Dendritic cell treated with granulocyte-macrophage colony-stimulating factor and Interleukin-4, amounts not matched to agents 40 ng/mL and 50 ng/mL, for 4 days (primary cell): ENCODE measurements at regions of chr10 and their contacts with region 1.

Region 1: GRCh38 chr10:31707093-31708039 is 221.3 kb downstream of the ARHGAP12 start:
- H3K4me3 Mint-ChIP-seq: peak overlapping the region; percentile 83
- H3K27ac Mint-ChIP-seq: peak overlapping the region; percentile 97
- H3K4me1 Mint-ChIP-seq: peaks cover 76% of the 10 kb centered on the region
- H3K27me3 Mint-ChIP-seq: no peaks in the 10 kb centered on the region

Region 2: GRCh38 chr10:31664803-31665202 is 42.6 kb before region 1 on chr10:
- intact Hi-C with region 1: no loop called
- H3K4me3 Mint-ChIP-seq: no peak overlapping the region
- H3K27ac Mint-ChIP-seq: no peak overlapping the region
- H3K4me1 Mint-ChIP-seq: peaks cover 10% of the 10 kb centered on the region
- H3K27me3 Mint-ChIP-seq: no peaks in the 10 kb centered on the region

Region 3: GRCh38 chr10:31749981-31750731 is 42.8 kb after region 1 on chr10:
- intact Hi-C with region 1: loop called (anchors 5 kb)
- H3K4me3 Mint-ChIP-seq: no peak overlapping the region
- H3K27ac Mint-ChIP-seq: peak overlapping the region; percentile 68
- H3K4me1 Mint-ChIP-seq: peaks cover 45% of the 10 kb centered on the region
- H3K27me3 Mint-ChIP-seq: peaks cover 2% of the 10 kb centered on the region

Region 4: DNA sequence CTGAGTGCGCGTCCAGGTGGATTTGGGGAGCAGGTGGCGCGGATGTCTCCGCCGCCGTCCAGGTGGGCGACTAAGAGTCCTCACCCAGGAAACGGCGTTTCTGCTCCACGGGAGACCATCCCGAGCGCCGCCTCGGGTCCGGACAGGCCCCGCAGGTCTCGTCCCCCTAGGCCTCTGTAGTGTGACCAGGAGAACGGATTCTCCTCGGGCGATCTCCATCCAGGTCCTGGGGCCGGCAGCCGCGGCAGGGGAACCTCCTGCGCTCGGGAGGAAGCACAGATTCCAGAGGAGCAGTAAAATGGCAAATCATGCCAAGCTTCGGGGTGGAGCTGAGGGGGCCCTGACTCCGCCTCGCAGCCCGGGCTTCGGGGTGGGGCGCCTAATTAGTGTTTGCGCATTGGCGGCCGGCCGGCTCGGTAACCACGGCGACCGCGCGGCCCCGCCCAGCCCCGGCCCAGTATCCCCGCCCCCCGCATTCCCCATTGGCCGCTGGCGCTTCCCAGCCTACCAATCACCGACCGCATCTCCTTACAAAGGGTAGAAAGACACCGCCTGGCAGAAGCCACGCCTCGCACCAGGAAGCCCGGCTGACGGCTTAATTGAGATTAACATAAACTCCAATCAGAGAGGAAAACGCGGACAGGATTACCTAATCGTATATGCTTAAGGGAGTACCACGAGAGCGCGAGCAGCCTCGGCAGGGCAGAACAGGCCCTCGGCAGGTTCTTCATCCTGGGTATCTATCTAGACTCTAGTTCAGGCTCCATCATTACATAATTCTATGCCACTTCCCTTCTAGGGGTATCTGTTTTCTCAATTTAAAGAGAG is 52.6 kb after region 1 on chr10:
- intact Hi-C with region 1: loop called (anchors 1 kb)
- H3K4me3 Mint-ChIP-seq: peak overlapping the region; percentile 90
- H3K27ac Mint-ChIP-seq: peak overlapping the region; percentile 93
- H3K4me1 Mint-ChIP-seq: peaks cover 32% of the 10 kb centered on the region
- H3K27me3 Mint-ChIP-seq: no peaks in the 10 kb centered on the region

Region 5: DNA sequence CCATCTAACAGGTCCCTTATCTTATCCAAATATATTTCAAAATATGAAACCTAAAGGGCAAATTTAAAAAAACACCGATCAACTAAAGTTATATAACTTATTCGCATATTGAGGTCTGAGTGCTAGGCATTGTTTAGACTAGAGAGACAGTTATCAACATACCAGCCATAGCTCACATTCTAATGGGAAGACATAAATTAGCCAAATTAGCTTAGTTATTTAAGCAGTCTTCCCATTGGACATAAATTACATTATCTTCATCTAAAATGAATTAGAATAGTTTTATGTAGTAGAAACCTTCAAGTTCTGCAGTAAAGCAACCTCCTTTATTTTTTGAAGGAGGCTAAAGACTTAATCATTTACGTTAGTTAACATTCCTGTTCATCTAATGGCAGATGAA is 331.4 kb after region 1 on chr10:
- intact Hi-C with region 1: no loop called
- H3K4me3 Mint-ChIP-seq: no peak overlapping the region
- H3K27ac Mint-ChIP-seq: no peak overlapping the region
- H3K4me1 Mint-ChIP-seq: peaks cover 28% of the 10 kb centered on the region
- H3K27me3 Mint-ChIP-seq: no peaks in the 10 kb centered on the region